WTC11 (cell line): ENCODE measurements at regions of chr11 and their contacts with region 1.

Region 1: GRCh38 chr11:94417386-94417987 is 16.3 kb upstream of the GPR83 start:
- DNase-seq: no peak
- ATAC-seq: peak; percentile 61
- H3K4me3 Mint-ChIP-seq: no peak overlapping the region
- H3K27ac Mint-ChIP-seq: no peak overlapping the region; the same call in 1 of the 2 replicates
- H3K4me1 Mint-ChIP-seq: no peaks in the 10 kb centered on the region
- H3K27me3 Mint-ChIP-seq: no peaks in the 10 kb centered on the region
- CTCF ChIP-seq: peak; percentile 43; the same call in 1 of the 2 replicates

Region 2: DNA sequence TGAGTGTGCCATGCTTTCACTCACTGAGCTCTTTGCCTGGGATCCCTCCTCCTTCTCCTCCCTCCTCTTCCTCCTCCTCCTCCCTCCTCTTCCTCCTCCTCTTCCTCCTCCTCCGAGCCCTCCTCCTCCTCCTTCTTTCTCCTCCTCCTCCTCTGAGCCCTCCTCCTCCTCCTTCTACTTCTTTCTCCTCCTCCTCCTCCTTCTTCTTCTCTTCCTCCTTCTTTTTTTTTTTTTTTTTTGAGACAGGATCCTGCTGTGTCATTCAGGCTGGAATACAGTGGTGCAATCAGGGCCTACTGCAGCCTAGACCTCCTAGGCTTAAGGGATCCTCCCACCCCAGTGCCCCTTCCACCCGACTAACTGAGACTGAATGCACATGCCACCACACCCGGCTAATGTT is 1024.6 kb before region 1 on chr11:
- CTCF ChIA-PET with region 1: no interaction called
- POLR2A ChIA-PET with region 1: interaction called, 12 read pairs
- DNase-seq: no peak
- ATAC-seq: peak; percentile 81
- H3K4me3 Mint-ChIP-seq: no peak overlapping the region
- H3K27ac Mint-ChIP-seq: no peak overlapping the region
- H3K4me1 Mint-ChIP-seq: peaks cover 42% of the 10 kb centered on the region
- H3K27me3 Mint-ChIP-seq: no peaks in the 10 kb centered on the region; the same call in 1 of the 2 replicates
- CTCF ChIP-seq: no peak

Region 3: DNA sequence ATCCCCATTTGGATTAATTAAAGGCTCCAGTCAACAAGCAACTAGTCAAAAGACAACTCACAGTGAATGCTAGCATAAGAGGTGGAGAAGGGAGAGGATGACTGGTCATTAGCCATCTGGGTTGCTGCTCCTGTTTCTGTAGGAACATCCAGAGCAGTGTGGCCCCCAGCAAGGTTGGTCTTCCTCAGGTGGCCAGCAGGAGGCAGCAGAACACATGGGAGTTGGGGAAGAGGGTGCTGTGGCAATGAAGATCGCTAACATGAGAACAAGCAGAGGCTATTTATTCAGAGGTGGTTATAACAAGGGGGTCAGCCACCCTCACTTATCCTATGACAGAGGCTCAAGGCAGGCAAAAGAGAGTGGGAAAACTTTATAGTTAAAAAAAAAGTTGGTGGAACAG is 91.8 kb before region 1 on chr11:
- CTCF ChIA-PET with region 1: interaction called, 11 read pairs
- POLR2A ChIA-PET with region 1: no interaction called
- DNase-seq: peak; percentile 89
- ATAC-seq: peak; percentile 97
- H3K4me3 Mint-ChIP-seq: no peak overlapping the region
- H3K27ac Mint-ChIP-seq: no peak overlapping the region
- H3K4me1 Mint-ChIP-seq: no peaks in the 10 kb centered on the region
- H3K27me3 Mint-ChIP-seq: peaks cover 5% of the 10 kb centered on the region; the same call in 1 of the 2 replicates
- CTCF ChIP-seq: peak; percentile 80